ENCODE measurements at regions of chr20 and their contacts with region 1.

Region 1: GRCh38 chr20:19205977-19206396 is 6.5 kb upstream of the SLC24A3 start:
- DNase-seq: peak; percentile 43
- H3K4me3 ChIP-seq: no peak overlapping the region
- H3K27ac ChIP-seq: no peak overlapping the region
- H3K4me1 ChIP-seq: no peaks in the 10 kb centered on the region
- H3K27me3 ChIP-seq: peaks cover under 1 to 2% of the 10 kb centered on the region in 2 experiments
- CTCF ChIP-seq: peak; percentile 84 to 88
- POLR2A ChIP-seq: no peak

Region 2: GRCh38 chr20:18412221-18412901 is 793.6 kb before region 1 on chr20:
- CTCF ChIA-PET with region 1: no interaction called
- POLR2A ChIA-PET with region 1: no interaction called
- dilution Hi-C with region 1: no loop called
- intact Hi-C with region 1: loop called (anchors 5 kb)
- DNase-seq: no peak
- H3K4me3 ChIP-seq: no peak overlapping the region
- H3K27ac ChIP-seq: no peak overlapping the region
- H3K4me1 ChIP-seq: no peaks in the 10 kb centered on the region
- H3K27me3 ChIP-seq: no peaks in the 10 kb centered on the region
- CTCF ChIP-seq: no peak
- POLR2A ChIP-seq: no peak

Region 3: DNA sequence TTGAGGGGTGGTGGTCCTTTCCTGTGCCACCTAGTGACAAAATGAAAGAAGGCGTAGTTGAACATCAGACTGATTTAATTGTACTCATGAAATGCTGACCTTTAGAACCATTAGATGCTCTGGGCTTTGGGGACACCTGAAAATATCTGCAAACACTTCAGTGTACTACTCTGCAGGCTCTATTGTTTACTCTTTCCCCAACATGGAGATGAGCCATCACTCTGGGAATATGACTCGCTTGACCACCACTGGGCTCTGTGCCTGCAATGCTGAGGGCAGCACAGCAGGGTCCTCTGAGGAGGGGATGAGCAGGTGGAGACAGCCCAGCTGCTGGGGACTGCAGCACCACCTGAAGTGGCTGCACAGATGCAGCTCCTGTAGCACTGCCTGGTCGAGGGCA is 68.3 kb before region 1 on chr20:
- CTCF ChIA-PET with region 1: no interaction called
- POLR2A ChIA-PET with region 1: no interaction called
- dilution Hi-C with region 1: no loop called
- intact Hi-C with region 1: no loop called
- DNase-seq: no peak
- H3K4me3 ChIP-seq: no peak overlapping the region
- H3K27ac ChIP-seq: no peak overlapping the region
- H3K4me1 ChIP-seq: no peaks in the 10 kb centered on the region
- H3K27me3 ChIP-seq: no peaks in the 10 kb centered on the region
- CTCF ChIP-seq: no peak
- POLR2A ChIP-seq: no peak

Region 4: DNA sequence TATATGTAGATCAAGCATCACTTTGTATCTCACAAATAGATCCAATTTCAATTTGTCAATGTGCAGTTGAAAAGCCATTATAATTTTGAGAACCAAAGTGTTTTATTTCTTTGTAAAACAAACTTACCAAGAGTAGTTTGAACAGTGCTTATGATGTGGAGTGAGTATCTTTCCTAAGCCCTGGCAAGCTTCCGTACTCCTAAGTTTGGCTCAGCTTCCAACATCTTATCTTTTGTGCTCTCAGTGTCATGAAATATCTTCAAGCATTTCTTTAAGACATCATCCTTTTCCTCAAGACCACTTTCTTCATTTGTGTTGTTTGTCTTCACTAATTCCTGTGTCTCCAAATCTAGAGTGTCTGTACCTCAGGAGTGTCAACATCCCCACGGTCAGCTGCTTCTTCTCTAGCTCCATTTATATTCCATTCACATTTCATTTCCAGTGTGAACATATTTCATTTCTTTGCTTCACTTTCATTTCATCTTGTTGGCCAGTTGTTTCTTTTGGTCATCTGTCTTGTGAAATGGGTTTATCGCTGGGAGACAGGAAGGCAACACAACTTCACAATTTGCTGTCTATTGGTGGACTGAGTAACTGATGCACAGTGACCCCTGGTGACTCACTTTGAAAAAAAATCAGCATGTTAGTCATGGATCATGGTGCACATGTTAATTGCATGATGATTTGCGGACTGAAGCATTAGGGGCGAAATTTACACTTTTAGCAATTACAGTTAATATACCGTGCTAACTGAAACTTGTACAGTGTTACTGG is 43.3 kb after region 1 on chr20:
- CTCF ChIA-PET with region 1: no interaction called
- POLR2A ChIA-PET with region 1: no interaction called
- dilution Hi-C with region 1: no loop called
- intact Hi-C with region 1: no loop called
- DNase-seq: no peak
- H3K4me3 ChIP-seq: no peak overlapping the region
- H3K27ac ChIP-seq: no peak overlapping the region
- H3K4me1 ChIP-seq: no peaks in the 10 kb centered on the region
- H3K27me3 ChIP-seq: no peaks in the 10 kb centered on the region
- CTCF ChIP-seq: no peak
- POLR2A ChIP-seq: no peak

Region 5: DNA sequence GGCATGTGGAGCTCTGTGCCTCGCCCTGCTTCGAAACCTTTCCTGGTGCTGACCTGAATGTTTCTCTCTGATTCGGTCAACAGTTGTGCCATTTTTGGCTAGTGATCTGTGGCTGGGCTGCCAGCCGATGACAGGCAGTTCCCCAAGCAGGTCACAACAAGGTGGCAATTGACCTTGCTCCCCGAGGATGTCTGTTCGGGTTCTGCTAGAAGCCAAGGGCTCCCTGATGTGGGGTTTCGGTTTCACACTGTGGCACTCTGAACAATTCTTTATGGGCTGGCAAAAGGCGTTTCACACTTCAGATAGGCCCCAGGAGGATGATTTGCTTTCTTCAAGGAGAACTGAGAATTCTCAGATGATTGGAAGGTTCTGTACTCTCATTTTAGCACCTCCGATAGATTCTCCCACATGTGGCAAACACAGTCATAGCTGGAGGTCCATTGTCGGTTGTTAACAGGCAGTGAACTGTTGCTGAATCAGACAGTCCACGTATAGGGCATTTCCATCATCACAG is 142.0 kb after region 1 on chr20:
- CTCF ChIA-PET with region 1: no interaction called
- POLR2A ChIA-PET with region 1: no interaction called
- dilution Hi-C with region 1: no loop called
- intact Hi-C with region 1: no loop called
- DNase-seq: no peak
- H3K4me3 ChIP-seq: no peak overlapping the region
- H3K27ac ChIP-seq: no peak overlapping the region
- H3K4me1 ChIP-seq: no peaks in the 10 kb centered on the region
- H3K27me3 ChIP-seq: no peaks in the 10 kb centered on the region
- CTCF ChIP-seq: no peak
- POLR2A ChIP-seq: no peak

Region 6: GRCh38 chr20:19583532-19584175 is 377.7 kb after region 1 on chr20:
- CTCF ChIA-PET with region 1: interaction called, 15 read pairs
- POLR2A ChIA-PET with region 1: no interaction called
- dilution Hi-C with region 1: no loop called
- intact Hi-C with region 1: no loop called
- DNase-seq: peak; percentile 43
- H3K4me3 ChIP-seq: no peak overlapping the region
- H3K27ac ChIP-seq: no peak overlapping the region
- H3K4me1 ChIP-seq: no peaks in the 10 kb centered on the region
- H3K27me3 ChIP-seq: no peaks in the 10 kb centered on the region
- CTCF ChIP-seq: peak; percentile 71 to 74
- POLR2A ChIP-seq: no peak